T-cell (primary cell): ENCODE measurements at regions of chr2 and their contacts with region 1.

Region 1: GRCh38 chr2:196076778-196077568 is 8.3 kb upstream of the DNAH7 start:
- DNase-seq: no peak
- ATAC-seq: no peak
- H3K4me3 ChIP-seq: no peak overlapping the region
- H3K4me3 Mint-ChIP-seq: no peak overlapping the region
- H3K27ac ChIP-seq: no peak overlapping the region
- H3K27ac Mint-ChIP-seq: no peak overlapping the region
- H3K4me1 ChIP-seq: peaks cover 0 to 4% of the 10 kb centered on the region in 2 experiments
- H3K4me1 Mint-ChIP-seq: peaks cover 24 to 28% (median 27%) of the 10 kb centered on the region in 3 donors
- H3K27me3 ChIP-seq: no peaks in the 10 kb centered on the region
- H3K27me3 Mint-ChIP-seq: no peaks in the 10 kb centered on the region

Region 2: GRCh38 chr2:195995499-195995898 is 81.5 kb before region 1 on chr2:
- CTCF ChIA-PET with region 1: no interaction called
- POLR2A ChIA-PET with region 1: no interaction called
- DNase-seq: no peak
- ATAC-seq: no peak
- H3K4me3 ChIP-seq: no peak overlapping the region
- H3K4me3 Mint-ChIP-seq: no peak overlapping the region
- H3K27ac ChIP-seq: no peak overlapping the region
- H3K27ac Mint-ChIP-seq: no peak overlapping the region
- H3K4me1 ChIP-seq: peaks cover 0 to 3% of the 10 kb centered on the region in 2 experiments
- H3K4me1 Mint-ChIP-seq: peaks cover 5 to 13% (median 12%) of the 10 kb centered on the region in 3 donors
- H3K27me3 ChIP-seq: peaks cover 0 to 5% of the 10 kb centered on the region in 2 experiments
- H3K27me3 Mint-ChIP-seq: peaks cover 5 to 10% of the 10 kb centered on the region in 2 donors

Region 3: DNA sequence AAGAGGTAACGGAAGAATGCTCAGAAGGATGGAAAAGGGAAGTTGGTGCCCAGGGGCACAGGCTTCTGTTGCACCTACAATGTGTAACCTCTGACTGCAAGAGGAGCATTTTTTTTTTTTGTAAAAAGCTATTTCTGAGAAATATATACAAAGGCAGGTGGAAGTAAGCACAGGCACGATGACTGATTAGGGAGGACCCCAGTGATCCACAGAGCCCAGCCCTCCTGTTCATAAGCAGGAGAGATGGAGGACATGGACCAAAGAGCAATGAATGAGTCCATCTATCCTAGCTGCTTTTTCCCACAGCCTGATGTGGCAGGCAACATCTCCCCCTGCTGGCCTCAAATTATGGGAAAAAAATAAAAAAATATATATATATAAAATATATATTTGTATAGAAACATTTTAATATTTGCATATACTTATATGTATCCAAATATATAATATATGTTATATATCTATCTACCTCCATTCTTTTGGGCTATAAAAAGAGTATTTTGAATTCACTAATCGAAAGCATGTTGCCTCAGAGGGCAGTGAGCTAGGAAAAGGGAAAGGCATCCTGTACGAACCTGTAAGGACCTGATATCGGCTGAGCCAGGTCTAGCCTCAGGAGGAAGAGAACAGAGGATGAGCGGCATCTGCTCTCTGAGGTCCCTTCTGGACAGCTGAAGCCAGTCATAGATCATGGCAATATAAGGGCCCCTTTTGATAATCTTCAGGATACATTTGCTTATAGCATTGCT is 260.4 kb after region 1 on chr2:
- CTCF ChIA-PET with region 1: interaction called, 34 to 35 read pairs
- POLR2A ChIA-PET with region 1: no interaction called
- DNase-seq: peak in 12 of 35 experiments; percentile 1 to 60 (median 8)
- ATAC-seq: peak in 2 of 4 experiments; percentile 20 to 32
- H3K4me3 ChIP-seq: no peak overlapping the region
- H3K4me3 Mint-ChIP-seq: no peak overlapping the region
- H3K27ac ChIP-seq: no peak overlapping the region
- H3K27ac Mint-ChIP-seq: no peak overlapping the region
- H3K4me1 ChIP-seq: no peaks in the 10 kb centered on the region
- H3K4me1 Mint-ChIP-seq: peaks cover 0 to 6% (median 3%) of the 10 kb centered on the region in 3 donors
- H3K27me3 ChIP-seq: no peaks in the 10 kb centered on the region
- H3K27me3 Mint-ChIP-seq: peaks cover 0 to 5% of the 10 kb centered on the region in 2 donors

Region 4: GRCh38 chr2:196453613-196454047 is 376.7 kb after region 1 on chr2:
- CTCF ChIA-PET with region 1: interaction called, 10 to 17 read pairs
- POLR2A ChIA-PET with region 1: no interaction called
- DNase-seq: peak in 21 of 35 experiments; percentile 1 to 62 (median 11)
- ATAC-seq: peak in 1 of 4 experiments; percentile 65
- H3K4me3 ChIP-seq: no peak overlapping the region
- H3K4me3 Mint-ChIP-seq: no peak overlapping the region
- H3K27ac ChIP-seq: no peak overlapping the region
- H3K27ac Mint-ChIP-seq: no peak overlapping the region
- H3K4me1 ChIP-seq: no peaks in the 10 kb centered on the region
- H3K4me1 Mint-ChIP-seq: peaks cover 2 to 6% (median 3%) of the 10 kb centered on the region in 3 donors
- H3K27me3 ChIP-seq: peaks cover 4 to 12% of the 10 kb centered on the region in 2 experiments
- H3K27me3 Mint-ChIP-seq: peaks cover 33 to 36% of the 10 kb centered on the region in 2 donors